ENCODE measurements at regions of chr18 and their contacts with region 1.

Region 1: DNA sequence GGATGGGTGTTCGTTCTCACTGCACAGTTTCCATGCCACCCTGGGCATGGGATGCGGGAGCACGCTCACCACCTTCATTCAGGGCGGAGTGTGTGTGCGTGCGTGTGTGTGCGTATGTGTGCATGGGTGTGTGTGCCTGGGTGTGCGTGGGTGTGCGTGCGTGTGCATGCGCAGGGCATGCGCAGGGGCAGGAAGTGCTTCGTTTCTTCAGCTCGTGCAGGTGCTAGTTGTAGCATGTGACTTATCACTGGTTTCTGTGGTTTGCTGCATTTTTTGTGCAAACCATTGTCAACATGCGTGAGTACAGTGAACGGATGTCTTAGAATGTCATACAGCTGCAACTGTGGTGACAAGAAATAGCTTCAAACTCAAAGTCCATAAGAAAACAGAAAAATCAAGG is 179.5 kb downstream of the PTGR3 start:
- DNase-seq: no peak

Region 2: GRCh38 chr18:74828200-74828599 is 201.3 kb before region 1 on chr18:
- intact Hi-C with region 1: loop called in 1 of 2 experiments (anchors 5 kb)
- DNase-seq: no peak

Region 3: DNA sequence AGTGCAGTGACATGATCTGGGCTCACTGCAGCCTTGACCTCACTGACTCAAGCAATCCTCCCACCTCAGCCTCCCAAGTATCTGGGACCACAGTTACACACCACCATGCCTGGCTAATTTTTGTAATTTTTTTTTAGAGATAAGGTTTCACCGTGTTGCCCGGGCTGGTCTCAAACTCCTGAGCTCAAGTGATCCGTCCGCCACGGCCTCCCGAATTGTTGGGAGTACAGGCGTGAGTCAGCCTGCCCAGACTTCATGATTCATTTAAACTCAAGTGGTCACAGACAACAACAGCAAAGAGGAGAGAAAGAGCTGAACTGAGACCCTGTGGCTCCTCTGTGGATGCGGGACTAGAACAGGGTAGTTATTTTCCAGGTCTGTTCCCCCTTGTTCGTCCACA is 264.1 kb after region 1 on chr18:
- intact Hi-C with region 1: no loop called
- DNase-seq: no peak

Measured in posterior vena cava (tissue), 2 donors.